Lower lobe of right lung (tissue), 2 donors: ENCODE measurements at regions of chr7 and their contacts with region 1.

Region 1: GRCh38 chr7:134690016-134690415 is 43.4 kb downstream of the BPGM start:
- DNase-seq: no peak
- ATAC-seq: peak; percentile 49 to 65
- H3K4me3 ChIP-seq: peak overlapping the region; percentile 12
- H3K27ac ChIP-seq: peak overlapping the region; percentile 48
- H3K4me1 ChIP-seq: peaks cover 13% of the 10 kb centered on the region
- H3K27me3 ChIP-seq: no peaks in the 10 kb centered on the region
- CTCF ChIP-seq: peak; percentile 45

Region 2: DNA sequence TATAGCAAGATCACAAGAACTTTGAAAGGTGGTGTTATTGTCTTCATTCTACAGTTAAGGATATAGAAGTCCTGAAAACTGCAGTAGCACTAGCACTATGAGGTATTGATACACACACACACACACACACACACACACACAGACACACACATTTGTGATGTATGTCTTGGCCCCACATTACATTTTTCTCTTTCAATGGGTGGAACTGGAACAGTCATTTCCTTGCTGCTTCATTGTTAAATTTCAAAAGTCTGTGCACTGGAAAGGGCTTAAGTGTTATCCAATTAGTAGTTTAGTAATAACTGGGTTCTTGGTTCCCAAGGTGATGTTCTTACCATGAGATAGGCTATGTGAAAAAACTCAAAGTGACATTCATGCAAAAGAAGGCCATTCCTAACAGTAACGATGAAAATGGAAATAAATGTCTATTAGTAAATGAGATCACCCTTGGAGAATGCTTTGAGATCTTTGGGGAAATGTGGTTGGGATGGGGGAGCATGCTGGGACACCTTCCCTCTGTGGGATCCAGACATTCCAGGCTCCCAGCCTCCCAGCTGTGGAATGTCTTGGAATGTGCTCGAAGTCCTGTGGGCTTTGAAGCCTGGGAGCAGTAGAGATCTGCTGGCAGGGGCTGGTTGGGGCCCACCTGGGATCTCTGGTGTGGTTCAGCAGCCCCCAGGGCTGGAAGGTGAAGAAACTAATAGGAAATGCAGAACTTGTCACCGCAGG is 52.1 kb after region 1 on chr7:
- intact Hi-C with region 1: loop called (anchors 10 kb)
- DNase-seq: no peak
- ATAC-seq: peak in 1 of 2 donors; percentile 48
- H3K4me3 ChIP-seq: no peak overlapping the region
- H3K27ac ChIP-seq: peak overlapping the region; percentile 61
- H3K4me1 ChIP-seq: peaks cover 7% of the 10 kb centered on the region
- H3K27me3 ChIP-seq: no peaks in the 10 kb centered on the region
- CTCF ChIP-seq: no peak

Region 3: DNA sequence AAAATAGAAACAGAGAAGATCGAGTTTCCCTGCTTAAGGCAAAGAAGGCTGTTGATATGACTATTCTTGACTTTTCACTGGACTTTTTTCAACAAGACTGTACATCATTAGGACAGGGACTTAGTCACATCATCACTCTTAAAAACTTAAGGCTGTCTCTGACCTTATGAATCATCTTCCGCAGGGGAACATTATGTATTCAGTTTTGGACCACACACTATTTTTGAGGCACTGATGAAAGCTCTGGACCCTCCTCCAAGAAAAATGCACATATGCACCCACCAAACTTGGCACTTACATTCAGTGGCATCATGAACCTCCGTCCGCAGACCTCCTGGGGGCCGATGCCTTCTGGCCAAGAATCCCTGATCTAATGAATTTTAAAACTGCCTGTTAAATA is 185.9 kb after region 1 on chr7:
- intact Hi-C with region 1: no loop called
- DNase-seq: no peak
- ATAC-seq: no peak
- H3K4me3 ChIP-seq: no peak overlapping the region
- H3K27ac ChIP-seq: no peak overlapping the region
- H3K4me1 ChIP-seq: no peaks in the 10 kb centered on the region
- H3K27me3 ChIP-seq: no peaks in the 10 kb centered on the region
- CTCF ChIP-seq: no peak

Region 4: DNA sequence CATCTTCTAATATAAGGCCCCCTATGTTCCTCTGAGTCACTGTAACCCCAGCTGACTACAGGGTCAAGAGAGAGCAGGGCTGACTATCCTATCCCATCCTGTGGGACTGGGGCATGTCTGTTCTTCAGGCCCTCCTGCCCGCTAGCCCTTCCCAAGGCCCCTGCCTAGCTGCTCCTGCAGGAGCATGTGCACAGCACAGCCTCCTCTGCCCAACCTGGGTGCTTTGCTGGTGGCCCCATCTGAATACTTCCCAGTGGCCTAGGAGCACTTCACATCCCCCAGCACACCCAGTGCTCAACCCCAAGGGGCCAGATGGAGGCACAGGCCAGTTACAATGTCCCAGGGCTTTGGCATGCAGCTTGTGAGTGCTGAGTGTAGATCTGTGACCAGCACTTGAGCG is 333.6 kb after region 1 on chr7:
- intact Hi-C with region 1: no loop called
- DNase-seq: no peak
- ATAC-seq: no peak
- H3K4me3 ChIP-seq: no peak overlapping the region
- H3K27ac ChIP-seq: no peak overlapping the region
- H3K4me1 ChIP-seq: no peaks in the 10 kb centered on the region
- H3K27me3 ChIP-seq: no peaks in the 10 kb centered on the region
- CTCF ChIP-seq: no peak